Heart left ventricle (tissue), 16 donors: ENCODE measurements at regions of chr9 and their contacts with region 1.

Region 1: GRCh38 chr9:136644598-136645351 is 17.9 kb upstream of the EGFL7 start:
- DNase-seq: peak; percentile 84 to 96 (median 90)
- ATAC-seq: peak; percentile 33 to 73 (median 64)
- H3K4me3 ChIP-seq: peak overlapping the region in 11 of 12 donors; percentile 15 to 64 (median 55)
- H3K27ac ChIP-seq: peak overlapping the region; percentile 78 to 99 (median 94)
- H3K4me1 ChIP-seq: peaks cover 4 to 80% (median 51%) of the 10 kb centered on the region in 12 donors
- H3K27me3 ChIP-seq: peaks cover 0 to 3% (median 0%) of the 10 kb centered on the region in 9 donors
- CTCF ChIP-seq: peak; percentile 78 to 93 (median 88)
- POLR2A ChIP-seq: peak in 1 of 2 donors; percentile 35

Region 2: GRCh38 chr9:136605988-136606660 is 38.7 kb before region 1 on chr9:
- intact Hi-C with region 1: no loop called
- DNase-seq: peak in 3 of 5 donors; percentile 47 to 79 (median 52)
- ATAC-seq: peak; percentile 42 to 60 (median 48)
- H3K4me3 ChIP-seq: no peak overlapping the region
- H3K27ac ChIP-seq: peak overlapping the region in 7 of 12 donors; percentile 18 to 57 (median 40)
- H3K4me1 ChIP-seq: peaks cover 9 to 41% (median 25%) of the 10 kb centered on the region in 12 donors
- H3K27me3 ChIP-seq: no peaks in the 10 kb centered on the region
- CTCF ChIP-seq: no peak
- POLR2A ChIP-seq: no peak

Region 3: DNA sequence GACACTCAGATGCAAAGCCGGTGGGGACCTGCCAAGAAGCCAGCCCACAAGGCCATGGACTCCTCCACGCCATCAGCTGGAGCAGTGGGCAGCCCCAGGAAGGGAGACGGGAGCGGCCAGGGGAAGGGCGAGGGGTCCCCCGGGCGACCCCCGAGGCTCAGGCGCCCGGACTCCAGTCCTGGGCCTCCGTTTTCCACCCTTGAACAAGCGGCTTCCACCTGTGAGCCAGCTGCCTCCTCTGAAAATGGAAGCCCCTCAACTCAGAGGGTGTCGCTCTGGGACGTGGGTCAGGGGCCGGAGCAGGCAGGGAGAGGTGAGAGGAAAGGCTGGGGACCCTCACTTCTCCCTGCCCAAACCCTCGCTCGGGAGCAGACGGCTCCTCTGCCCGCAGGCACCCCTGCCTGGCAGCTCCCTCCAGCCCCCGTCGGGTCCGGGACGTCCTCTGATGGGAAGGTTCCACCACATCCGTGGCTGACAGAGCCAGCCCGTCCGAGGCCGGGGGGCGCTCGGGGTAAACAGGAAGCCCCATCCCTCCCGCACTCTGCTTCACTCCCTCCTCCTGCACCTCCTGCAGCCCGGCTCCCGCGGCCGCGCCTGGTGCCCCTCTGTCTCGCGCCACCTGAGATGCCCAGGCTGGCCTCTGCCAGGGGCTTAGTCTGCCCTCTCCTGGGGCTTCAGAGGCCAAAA is 14.2 kb after region 1 on chr9:
- intact Hi-C with region 1: loop called in 4 of 10 experiments (anchors 1 to 2 kb)
- DNase-seq: peak in 2 of 5 donors; percentile 18 to 32
- ATAC-seq: no peak
- H3K4me3 ChIP-seq: peak overlapping the region; percentile 9 to 89 (median 77)
- H3K27ac ChIP-seq: peak overlapping the region; percentile 75 to 99 (median 96)
- H3K4me1 ChIP-seq: peaks cover 0 to 42% (median 19%) of the 10 kb centered on the region in 12 donors
- H3K27me3 ChIP-seq: peaks cover 0 to 78% (median 0%) of the 10 kb centered on the region in 9 donors
- CTCF ChIP-seq: no peak
- POLR2A ChIP-seq: no peak

Region 4: GRCh38 chr9:136694236-136694942 is 49.6 kb after region 1 on chr9:
- intact Hi-C with region 1: loop called in 4 of 10 experiments (anchors 2 to 5 kb)
- DNase-seq: peak in 2 of 5 donors; percentile 64 to 77
- ATAC-seq: peak in 3 of 4 donors; percentile 43 to 57 (median 50)
- H3K4me3 ChIP-seq: no peak overlapping the region
- H3K27ac ChIP-seq: no peak overlapping the region
- H3K4me1 ChIP-seq: peaks cover 3 to 51% (median 30%) of the 10 kb centered on the region in 12 donors
- H3K27me3 ChIP-seq: no peaks in the 10 kb centered on the region
- CTCF ChIP-seq: peak; percentile 60 to 81 (median 73)
- POLR2A ChIP-seq: no peak